ENCODE measurements at regions of chr16 and their contacts with region 1.

Region 1: GRCh38 chr16:30874821-30875717 is 18.8 kb downstream of the BCL7C start:
- DNase-seq: peak; percentile 90
- ATAC-seq: peak; percentile 83
- H3K4me3 Mint-ChIP-seq: peak overlapping the region; percentile 94
- H3K27ac Mint-ChIP-seq: peak overlapping the region; percentile 95
- H3K4me1 Mint-ChIP-seq: peaks cover 37% of the 10 kb centered on the region
- H3K27me3 Mint-ChIP-seq: no peaks in the 10 kb centered on the region
- CTCF ChIP-seq: no peak

Region 2: GRCh38 chr16:30786936-30787612 is 88.0 kb before region 1 on chr16 and contains the start of gene ZNF629:
- CTCF ChIA-PET with region 1: no interaction called
- POLR2A ChIA-PET with region 1: interaction called, 5 read pairs
- intact Hi-C with region 1: loop called (anchors 1 kb)
- DNase-seq: peak; percentile 34
- ATAC-seq: peak; percentile 69
- H3K4me3 Mint-ChIP-seq: peak within 1 kb of the TSS; percentile 85
- H3K27ac Mint-ChIP-seq: no peak within 1 kb of the TSS
- H3K4me1 Mint-ChIP-seq: peaks cover 17% of the 10 kb centered on the region
- H3K27me3 Mint-ChIP-seq: peaks cover 8% of the 10 kb centered on the region
- CTCF ChIP-seq: no peak
- total RNA-seq, gene ZNF629: 9.1 and 9.3 TPM in 2 replicates

Region 3: DNA sequence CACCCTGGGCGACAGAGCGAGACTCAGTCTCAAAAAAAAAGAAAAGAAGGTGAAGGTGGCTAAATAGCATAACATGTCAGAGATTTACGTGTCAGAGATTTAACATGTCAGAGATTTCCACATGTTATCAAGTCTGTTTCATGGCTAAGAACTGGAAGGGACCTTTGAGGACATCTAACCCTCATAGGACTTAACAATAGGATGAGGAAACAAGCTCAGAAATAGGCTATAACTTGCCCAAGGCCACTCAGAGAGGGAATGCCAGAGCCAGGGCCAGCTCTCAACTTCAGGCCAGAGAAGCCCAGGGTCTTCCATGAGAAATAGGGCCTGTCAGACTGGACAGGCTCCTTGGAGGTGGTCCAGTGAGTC is 61.3 kb before region 1 on chr16:
- CTCF ChIA-PET with region 1: no interaction called
- POLR2A ChIA-PET with region 1: interaction called, 15 read pairs
- intact Hi-C with region 1: no loop called
- DNase-seq: no peak
- ATAC-seq: no peak
- H3K4me3 Mint-ChIP-seq: peak overlapping the region; percentile 84
- H3K27ac Mint-ChIP-seq: peak overlapping the region; percentile 75
- H3K4me1 Mint-ChIP-seq: peaks cover 13% of the 10 kb centered on the region
- H3K27me3 Mint-ChIP-seq: no peaks in the 10 kb centered on the region
- CTCF ChIP-seq: no peak

Region 4: GRCh38 chr16:30902029-30902972 is 27.2 kb after region 1 on chr16:
- CTCF ChIA-PET with region 1: interaction called, 22 read pairs
- POLR2A ChIA-PET with region 1: interaction called, 77 read pairs
- intact Hi-C with region 1: loop called (anchors 1 kb)
- DNase-seq: peak; percentile 77
- ATAC-seq: peak; percentile 78
- H3K4me3 Mint-ChIP-seq: peak overlapping the region; percentile 95
- H3K27ac Mint-ChIP-seq: peak overlapping the region; percentile 95
- H3K4me1 Mint-ChIP-seq: peaks cover 31% of the 10 kb centered on the region
- H3K27me3 Mint-ChIP-seq: no peaks in the 10 kb centered on the region
- CTCF ChIP-seq: no peak

Region 5: DNA sequence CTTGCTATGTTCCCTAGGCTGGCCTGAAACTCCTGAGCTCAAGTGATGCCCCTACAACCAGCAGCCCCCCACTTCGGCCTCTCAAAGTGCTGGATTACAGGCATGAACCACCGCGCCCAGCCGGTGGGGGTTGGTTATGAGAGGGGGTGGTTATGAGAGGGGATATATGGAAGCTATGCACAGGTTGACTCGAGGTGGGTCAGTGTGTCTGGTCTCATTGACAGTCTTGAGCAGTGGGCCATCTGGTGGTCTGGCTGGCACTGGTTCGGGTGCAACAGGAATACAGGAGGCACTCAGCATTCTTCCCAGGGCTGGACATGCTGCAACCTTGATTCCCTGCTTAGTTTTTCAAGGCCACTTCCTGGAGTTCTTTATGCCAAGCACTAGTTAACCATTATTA is 140.9 kb after region 1 on chr16:
- CTCF ChIA-PET with region 1: no interaction called
- POLR2A ChIA-PET with region 1: no interaction called
- intact Hi-C with region 1: no loop called
- DNase-seq: no peak
- ATAC-seq: no peak
- H3K4me3 Mint-ChIP-seq: no peak overlapping the region
- H3K27ac Mint-ChIP-seq: no peak overlapping the region
- H3K4me1 Mint-ChIP-seq: peaks cover 13% of the 10 kb centered on the region
- H3K27me3 Mint-ChIP-seq: peaks cover 21% of the 10 kb centered on the region
- CTCF ChIP-seq: no peak

Measured in activated B cell treated with CpG ODN at 0.5 μM for 24 hours (primary cell).